Activated CD4-positive, alpha-beta T cell treated with anti-CD3 and anti-CD28 coated beads for 36 hours (primary cell): ENCODE measurements at regions of chr12 and their contacts with region 1.

Region 1: GRCh38 chr12:101939856-101940265 is 62.5 kb downstream of the DRAM1 start:
- DNase-seq: peak; percentile 69
- ATAC-seq: peak; percentile 40
- H3K4me3 Mint-ChIP-seq: no peak overlapping the region
- H3K27ac Mint-ChIP-seq: no peak overlapping the region
- H3K4me1 Mint-ChIP-seq: peaks cover 12% of the 10 kb centered on the region
- H3K27me3 Mint-ChIP-seq: peaks cover 13% of the 10 kb centered on the region

Region 2: GRCh38 chr12:100504804-100505203 is 1435.1 kb before region 1 on chr12:
- CTCF ChIA-PET with region 1: no interaction called
- POLR2A ChIA-PET with region 1: no interaction called
- intact Hi-C with region 1: no loop called
- DNase-seq: no peak
- ATAC-seq: no peak
- H3K4me3 Mint-ChIP-seq: no peak overlapping the region
- H3K27ac Mint-ChIP-seq: no peak overlapping the region
- H3K4me1 Mint-ChIP-seq: no peaks in the 10 kb centered on the region
- H3K27me3 Mint-ChIP-seq: peaks cover 2% of the 10 kb centered on the region

Region 3: DNA sequence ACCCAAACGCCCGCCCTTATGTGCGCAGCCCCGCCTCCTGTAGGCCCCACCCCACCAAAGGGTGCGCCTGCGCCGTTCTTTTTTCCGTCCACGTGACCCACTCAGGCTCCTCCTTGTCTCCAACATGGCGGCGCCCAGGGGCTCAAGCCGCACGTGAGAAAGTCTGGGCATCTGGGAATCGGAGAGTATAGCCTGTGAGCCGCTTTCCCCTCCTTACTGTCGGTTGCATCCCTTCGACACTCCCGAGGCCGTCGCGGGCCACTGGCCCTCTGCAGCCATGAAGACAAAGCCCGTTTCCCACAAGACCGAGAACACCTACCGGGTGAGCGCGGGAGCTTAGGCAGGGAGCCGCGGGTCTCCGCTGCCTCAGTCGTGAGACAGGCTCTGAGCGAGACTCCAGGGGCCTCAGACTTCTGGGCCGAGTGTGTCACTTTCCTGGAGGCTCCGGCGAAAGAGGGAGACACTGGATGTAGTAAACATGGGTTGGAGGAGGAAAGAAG is 659.8 kb before region 1 on chr12 and contains the start of gene UTP20:
- CTCF ChIA-PET with region 1: no interaction called
- POLR2A ChIA-PET with region 1: no interaction called
- intact Hi-C with region 1: no loop called
- DNase-seq: peak; percentile 97
- ATAC-seq: peak; percentile 100
- H3K4me3 Mint-ChIP-seq: peak within 1 kb of the TSS; percentile 93
- H3K27ac Mint-ChIP-seq: peak within 1 kb of the TSS; percentile 85
- H3K4me1 Mint-ChIP-seq: peaks cover 17% of the 10 kb centered on the region
- H3K27me3 Mint-ChIP-seq: peaks cover 9% of the 10 kb centered on the region
- total RNA-seq, gene UTP20: 29.4 to 33.1 TPM

Region 4: GRCh38 chr12:102169922-102170621 is 230.2 kb after region 1 on chr12:
- CTCF ChIA-PET with region 1: no interaction called
- POLR2A ChIA-PET with region 1: no interaction called
- intact Hi-C with region 1: loop called in 1 of 2 experiments (anchors 5 kb)
- DNase-seq: peak; percentile 15
- ATAC-seq: peak; percentile 60
- H3K4me3 Mint-ChIP-seq: no peak overlapping the region
- H3K27ac Mint-ChIP-seq: no peak overlapping the region
- H3K4me1 Mint-ChIP-seq: peaks cover 14% of the 10 kb centered on the region
- H3K27me3 Mint-ChIP-seq: no peaks in the 10 kb centered on the region

Region 5: GRCh38 chr12:102702447-102703114 is 762.7 kb after region 1 on chr12:
- CTCF ChIA-PET with region 1: interaction called, 5 read pairs
- POLR2A ChIA-PET with region 1: no interaction called
- intact Hi-C with region 1: loop called (anchors 1 to 5 kb)
- DNase-seq: peak; percentile 55
- ATAC-seq: no peak
- H3K4me3 Mint-ChIP-seq: no peak overlapping the region
- H3K27ac Mint-ChIP-seq: no peak overlapping the region
- H3K4me1 Mint-ChIP-seq: no peaks in the 10 kb centered on the region
- H3K27me3 Mint-ChIP-seq: peaks cover 2% of the 10 kb centered on the region

Region 6: DNA sequence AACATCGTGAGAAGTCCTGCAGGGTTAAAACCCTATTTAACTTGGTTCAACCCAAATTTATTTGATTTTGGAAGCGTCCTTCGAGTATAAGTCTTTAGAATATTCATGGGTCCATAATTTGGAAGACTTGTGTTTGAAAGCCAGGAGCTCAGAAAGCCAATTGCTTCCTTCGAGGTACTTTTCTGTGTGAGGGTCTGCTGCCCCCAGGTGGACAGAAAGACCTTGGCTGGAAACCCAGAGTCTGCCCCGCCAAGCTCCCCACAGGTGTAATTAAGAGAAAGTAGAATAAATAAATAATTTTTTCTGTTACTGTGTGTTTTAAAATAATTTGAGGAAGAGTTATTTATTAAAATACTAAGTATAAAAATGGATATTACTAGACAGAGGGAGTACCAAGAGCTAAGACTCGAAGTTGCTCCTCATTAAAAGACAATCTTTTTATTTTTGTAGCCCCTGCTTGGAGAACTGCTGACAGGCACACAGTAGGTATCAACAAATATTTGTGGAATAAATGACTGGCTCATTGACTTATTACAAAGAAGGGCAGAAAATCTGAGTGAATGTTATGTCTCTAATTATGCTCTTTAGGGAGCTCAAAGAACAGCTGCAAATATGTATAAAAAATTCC is 871.4 kb after region 1 on chr12:
- CTCF ChIA-PET with region 1: no interaction called
- POLR2A ChIA-PET with region 1: no interaction called
- intact Hi-C with region 1: loop called in 1 of 2 experiments (anchors 1 kb)
- DNase-seq: peak; percentile 43
- ATAC-seq: no peak
- H3K4me3 Mint-ChIP-seq: no peak overlapping the region
- H3K27ac Mint-ChIP-seq: no peak overlapping the region
- H3K4me1 Mint-ChIP-seq: no peaks in the 10 kb centered on the region
- H3K27me3 Mint-ChIP-seq: peaks cover 4% of the 10 kb centered on the region

Region 7: GRCh38 chr12:103548622-103549601 is 1609.1 kb after region 1 on chr12:
- CTCF ChIA-PET with region 1: no interaction called
- POLR2A ChIA-PET with region 1: no interaction called
- intact Hi-C with region 1: loop called in 1 of 2 experiments (anchors 2 kb)
- DNase-seq: peak; percentile 85
- ATAC-seq: peak; percentile 79
- H3K4me3 Mint-ChIP-seq: no peak overlapping the region
- H3K27ac Mint-ChIP-seq: no peak overlapping the region
- H3K4me1 Mint-ChIP-seq: peaks cover 5% of the 10 kb centered on the region
- H3K27me3 Mint-ChIP-seq: peaks cover 17% of the 10 kb centered on the region